ENCODE measurements at regions of chr7 and their contacts with region 1.

Region 1: DNA sequence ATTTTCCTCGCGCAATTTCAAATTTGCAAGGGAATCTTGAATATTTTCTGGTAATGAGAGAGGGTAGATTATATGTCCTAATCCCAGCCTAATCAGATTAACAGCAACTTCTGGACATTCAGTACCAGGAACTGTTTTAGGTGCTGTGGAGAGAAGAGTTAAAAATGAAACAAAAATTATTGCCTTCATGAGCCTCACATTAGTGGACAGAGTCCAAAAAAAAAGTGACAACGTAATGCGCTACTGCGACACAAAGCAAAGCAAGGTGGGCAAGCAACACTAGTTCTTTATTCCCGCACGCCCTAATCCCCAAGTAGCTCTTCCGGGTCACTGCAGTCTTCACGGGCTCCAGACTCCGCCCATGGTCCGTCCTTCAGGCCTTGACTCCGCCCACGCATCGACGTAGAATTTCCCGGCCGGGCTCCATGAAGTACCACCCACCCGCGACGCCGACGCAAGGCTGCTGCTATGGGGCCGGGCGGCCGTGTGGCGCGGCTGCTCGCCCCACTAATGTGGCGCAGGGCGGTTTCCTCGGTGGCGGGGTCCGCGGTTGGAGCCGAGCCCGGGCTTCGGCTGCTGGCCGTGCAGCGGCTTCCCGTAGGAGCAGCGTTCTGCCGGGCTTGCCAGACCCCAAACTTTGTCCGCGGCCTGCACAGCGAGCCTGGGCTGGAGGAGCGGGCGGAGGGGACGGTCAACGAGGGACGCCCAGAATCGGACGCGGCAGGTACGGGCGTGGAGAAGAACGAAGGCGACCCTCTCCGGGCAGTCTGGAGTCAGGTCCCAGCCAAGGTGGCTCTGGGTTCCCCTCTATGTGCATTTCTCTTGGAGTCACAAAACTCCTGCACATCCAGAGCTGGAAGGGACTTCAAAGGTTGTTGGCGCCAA is at the start of gene MALSU1:
- DNase-seq: peak; percentile 98
- H3K4me3 Mint-ChIP-seq: peak within 1 kb of the TSS; percentile 96
- H3K27ac Mint-ChIP-seq: peak within 1 kb of the TSS; percentile 97
- H3K4me1 Mint-ChIP-seq: peaks cover 36% of the 10 kb centered on the region
- H3K27me3 Mint-ChIP-seq: peaks cover 3% of the 10 kb centered on the region
- total RNA-seq, gene MALSU1: 100 to 101 TPM

Region 2: GRCh38 chr7:23168111-23168885 is 130.8 kb before region 1 on chr7:
- CTCF ChIA-PET with region 1: no interaction called
- POLR2A ChIA-PET with region 1: no interaction called
- intact Hi-C with region 1: no loop called
- DNase-seq: no peak
- H3K4me3 Mint-ChIP-seq: no peak overlapping the region
- H3K27ac Mint-ChIP-seq: no peak overlapping the region
- H3K4me1 Mint-ChIP-seq: no peaks in the 10 kb centered on the region
- H3K27me3 Mint-ChIP-seq: no peaks in the 10 kb centered on the region

Region 3: DNA sequence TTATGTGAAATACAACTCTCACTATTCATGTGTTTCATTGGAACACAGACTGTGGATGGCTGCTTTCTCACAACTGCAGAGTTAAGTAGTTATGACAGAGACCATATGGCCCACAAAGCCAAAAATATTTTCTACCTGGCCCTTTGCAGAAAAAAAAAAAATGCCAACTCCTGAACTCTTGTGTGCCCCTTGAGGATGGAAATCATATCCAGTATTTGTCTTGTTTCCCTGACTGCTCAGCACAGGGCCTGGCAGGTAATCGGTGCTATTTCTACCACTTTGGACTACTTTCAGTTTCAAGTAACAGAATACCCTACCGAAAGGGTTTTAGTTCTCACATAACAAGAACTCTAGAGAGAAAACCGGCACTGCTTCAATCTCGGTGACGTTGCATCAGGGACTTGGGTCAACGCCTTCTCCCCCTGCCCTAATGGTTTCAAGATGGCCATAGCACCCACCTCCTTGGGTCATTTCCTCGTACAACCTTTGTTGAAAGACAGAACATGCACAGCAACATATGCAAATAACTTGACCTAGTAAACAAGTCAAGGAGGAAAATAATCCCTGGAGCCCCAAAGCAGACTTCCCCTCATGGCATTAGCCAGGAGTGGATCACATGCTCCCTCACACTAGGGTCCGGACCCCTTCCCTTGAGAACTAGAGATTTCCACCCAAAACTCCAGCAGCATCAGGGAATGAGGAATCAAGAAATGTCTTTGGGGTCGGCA is 64.4 kb before region 1 on chr7:
- CTCF ChIA-PET with region 1: no interaction called
- POLR2A ChIA-PET with region 1: no interaction called
- intact Hi-C with region 1: no loop called
- DNase-seq: no peak
- H3K4me3 Mint-ChIP-seq: no peak overlapping the region
- H3K27ac Mint-ChIP-seq: no peak overlapping the region
- H3K4me1 Mint-ChIP-seq: peaks cover 5% of the 10 kb centered on the region
- H3K27me3 Mint-ChIP-seq: no peaks in the 10 kb centered on the region

Region 4: GRCh38 chr7:23247603-23248335 is 51.4 kb before region 1 on chr7:
- CTCF ChIA-PET with region 1: no interaction called
- POLR2A ChIA-PET with region 1: no interaction called
- intact Hi-C with region 1: no loop called
- DNase-seq: no peak
- H3K4me3 Mint-ChIP-seq: no peak overlapping the region
- H3K27ac Mint-ChIP-seq: no peak overlapping the region
- H3K4me1 Mint-ChIP-seq: peaks cover 3% of the 10 kb centered on the region
- H3K27me3 Mint-ChIP-seq: peaks cover 63% of the 10 kb centered on the region

Region 5: DNA sequence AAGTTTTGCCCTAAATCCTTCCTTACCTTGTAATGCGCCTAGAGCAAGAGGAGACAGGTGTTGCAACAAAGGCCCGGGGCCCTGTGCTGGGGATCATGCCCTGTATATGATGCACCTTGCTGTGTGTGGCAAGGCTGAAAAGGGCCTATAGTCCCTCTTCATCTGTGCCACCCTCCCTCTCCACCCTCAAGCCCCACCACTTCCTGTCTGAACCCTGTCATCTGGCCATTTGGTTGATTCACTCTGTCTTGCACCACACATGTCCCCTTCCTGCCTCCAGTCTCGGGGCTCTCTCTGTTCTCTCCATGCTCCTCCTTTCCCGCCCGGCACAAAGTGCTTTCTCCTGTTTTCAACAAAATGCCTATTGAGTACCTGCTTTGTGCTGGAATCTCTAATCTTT is 11.5 kb before region 1 on chr7:
- CTCF ChIA-PET with region 1: no interaction called
- POLR2A ChIA-PET with region 1: no interaction called
- intact Hi-C with region 1: loop called (anchors 1 kb)
- DNase-seq: peak; percentile 47
- H3K4me3 Mint-ChIP-seq: no peak overlapping the region
- H3K27ac Mint-ChIP-seq: no peak overlapping the region
- H3K4me1 Mint-ChIP-seq: peaks cover 6% of the 10 kb centered on the region
- H3K27me3 Mint-ChIP-seq: no peaks in the 10 kb centered on the region

Region 6: DNA sequence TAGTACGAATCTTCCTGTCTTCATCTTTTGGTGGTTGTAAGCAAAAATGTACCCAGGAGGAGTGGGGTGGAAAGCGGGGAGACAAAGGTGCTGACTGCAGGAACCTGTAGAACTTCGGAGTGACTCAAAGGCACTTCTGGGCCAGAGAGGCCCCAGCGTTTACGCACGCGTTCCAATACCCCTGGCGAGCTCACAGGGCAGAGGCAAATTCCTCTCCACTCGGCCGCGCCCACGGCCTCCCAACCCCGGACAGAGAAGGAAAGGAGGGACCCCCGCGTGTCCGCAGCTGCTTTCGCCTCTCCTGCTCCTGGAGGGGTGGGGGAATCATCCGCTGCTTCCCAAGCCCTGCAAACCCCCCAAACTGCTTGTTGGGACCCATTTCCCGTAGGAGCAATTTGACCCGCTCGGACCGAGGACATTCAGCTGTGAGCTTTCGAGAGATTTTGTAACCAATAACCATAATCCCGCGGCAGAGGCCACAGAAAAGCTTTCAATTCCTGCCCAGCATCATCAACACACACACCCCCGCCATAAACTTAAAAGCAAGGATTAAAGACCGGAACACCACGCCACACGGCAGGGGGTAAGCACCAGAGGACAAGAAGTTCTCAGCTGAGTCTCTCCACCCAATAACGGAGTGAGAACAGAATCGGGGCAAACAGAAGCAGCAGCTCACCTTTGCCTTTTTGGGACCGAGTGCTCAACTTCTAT is 168.8 kb after region 1 on chr7:
- CTCF ChIA-PET with region 1: interaction called, 3 read pairs
- POLR2A ChIA-PET with region 1: no interaction called
- intact Hi-C with region 1: loop called (anchors 2 kb)
- DNase-seq: peak; percentile 45
- H3K4me3 Mint-ChIP-seq: peak overlapping the region; percentile 65
- H3K27ac Mint-ChIP-seq: no peak overlapping the region
- H3K4me1 Mint-ChIP-seq: peaks cover 31% of the 10 kb centered on the region
- H3K27me3 Mint-ChIP-seq: peaks cover 63% of the 10 kb centered on the region

Region 7: DNA sequence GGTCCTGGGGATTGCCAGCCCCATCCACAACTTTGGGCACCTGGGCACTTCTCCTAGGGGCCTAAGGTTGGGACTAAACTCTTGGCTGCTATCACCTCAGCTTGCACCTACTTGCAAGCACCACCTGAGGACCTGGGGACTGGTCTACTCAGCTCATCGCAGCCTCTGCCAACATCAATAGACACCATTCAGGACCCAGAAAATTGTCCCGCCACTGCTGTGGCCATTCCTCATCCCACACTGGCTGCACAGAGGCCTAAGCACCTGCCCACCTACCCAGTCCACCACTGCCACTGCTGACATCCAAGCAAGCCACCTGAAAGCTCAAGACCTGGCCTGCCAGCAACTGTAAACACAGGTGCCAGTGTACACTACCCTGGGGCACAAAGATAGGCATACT is 645.0 kb after region 1 on chr7:
- CTCF ChIA-PET with region 1: no interaction called
- POLR2A ChIA-PET with region 1: no interaction called
- intact Hi-C with region 1: no loop called
- DNase-seq: no peak
- H3K4me3 Mint-ChIP-seq: no peak overlapping the region
- H3K27ac Mint-ChIP-seq: no peak overlapping the region
- H3K4me1 Mint-ChIP-seq: no peaks in the 10 kb centered on the region
- H3K27me3 Mint-ChIP-seq: peaks cover 16% of the 10 kb centered on the region

Measured in activated CD4-positive, alpha-beta memory T cell treated with anti-CD3 and anti-CD28 coated beads for 36 hours (primary cell).